Activated CD4-positive, alpha-beta T cell treated with anti-CD3 and anti-CD28 coated beads for 36 hours (primary cell): ENCODE measurements at regions of chr1 and their contacts with region 1.

Region 1: GRCh38 chr1:51878616-51879336 is at the start of gene NRDC:
- DNase-seq: peak; percentile 100
- ATAC-seq: peak; percentile 95
- H3K4me3 Mint-ChIP-seq: no peak within 1 kb of the TSS
- H3K27ac Mint-ChIP-seq: no peak within 1 kb of the TSS
- H3K4me1 Mint-ChIP-seq: peaks cover 27% of the 10 kb centered on the region
- H3K27me3 Mint-ChIP-seq: peaks cover 12% of the 10 kb centered on the region
- total RNA-seq, gene NRDC: 149 to 186 TPM

Region 2: DNA sequence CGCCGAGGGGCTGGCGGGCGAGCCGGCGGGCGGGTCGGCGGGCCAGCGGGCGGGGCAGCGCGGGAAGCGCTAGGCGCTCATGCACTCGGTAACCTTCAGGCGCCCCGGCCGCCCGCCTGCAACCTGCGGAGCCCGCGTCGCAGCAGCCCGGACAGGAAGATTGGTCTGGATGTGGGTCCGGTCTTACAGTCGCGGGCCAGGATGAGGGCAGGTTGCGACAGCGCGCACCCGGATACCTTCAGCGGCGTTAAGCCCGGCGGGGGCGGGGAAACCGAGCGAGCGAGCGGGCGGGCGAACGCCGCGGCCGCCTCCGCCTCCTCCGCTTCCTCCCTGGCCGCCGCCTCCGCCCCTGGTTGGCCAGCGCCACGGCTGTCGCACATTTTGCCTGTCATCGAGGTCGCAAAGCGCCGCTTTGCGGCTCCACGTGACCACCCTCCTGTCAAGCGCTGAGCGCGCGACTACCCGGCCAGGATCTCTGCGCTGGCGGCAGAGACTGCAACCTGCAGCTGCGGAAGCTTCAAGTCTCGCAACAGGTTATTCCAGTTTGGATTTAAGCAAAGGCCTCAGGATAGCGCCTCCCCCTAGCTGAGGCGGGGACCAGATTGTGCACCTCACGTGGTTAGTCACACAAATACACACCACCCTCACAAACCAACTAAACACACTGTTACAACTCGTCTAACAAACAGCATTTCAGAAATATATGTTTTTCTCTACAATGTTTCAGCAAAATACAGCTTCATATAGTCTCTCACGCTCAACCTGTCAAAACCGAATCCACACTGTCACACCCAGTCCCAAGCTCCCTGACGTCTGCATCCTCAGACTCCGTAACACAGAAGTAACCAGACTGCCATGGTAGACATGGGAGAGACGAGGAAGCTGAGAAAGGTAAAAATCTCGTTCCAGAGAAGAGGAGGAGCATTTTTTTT is 918.6 kb before region 1 on chr1 and contains the start of gene FAF1:
- CTCF ChIA-PET with region 1: no interaction called
- POLR2A ChIA-PET with region 1: no interaction called
- intact Hi-C with region 1: loop called in 1 of 2 experiments (anchors 1 kb)
- DNase-seq: peak; percentile 98
- ATAC-seq: peak; percentile 91
- H3K4me3 Mint-ChIP-seq: peak within 1 kb of the TSS; percentile 80
- H3K27ac Mint-ChIP-seq: peak within 1 kb of the TSS; percentile 96
- H3K4me1 Mint-ChIP-seq: peaks cover 24% of the 10 kb centered on the region
- H3K27me3 Mint-ChIP-seq: no peaks in the 10 kb centered on the region
- total RNA-seq, gene FAF1: 64.5 to 73.1 TPM

Region 3: GRCh38 chr1:51247022-51247421 is 631.8 kb before region 1 on chr1:
- CTCF ChIA-PET with region 1: no interaction called
- POLR2A ChIA-PET with region 1: interaction called, 11 read pairs
- intact Hi-C with region 1: no loop called
- DNase-seq: no peak
- ATAC-seq: peak; percentile 51
- H3K4me3 Mint-ChIP-seq: no peak overlapping the region
- H3K27ac Mint-ChIP-seq: no peak overlapping the region
- H3K4me1 Mint-ChIP-seq: peaks cover 46% of the 10 kb centered on the region
- H3K27me3 Mint-ChIP-seq: no peaks in the 10 kb centered on the region

Region 4: DNA sequence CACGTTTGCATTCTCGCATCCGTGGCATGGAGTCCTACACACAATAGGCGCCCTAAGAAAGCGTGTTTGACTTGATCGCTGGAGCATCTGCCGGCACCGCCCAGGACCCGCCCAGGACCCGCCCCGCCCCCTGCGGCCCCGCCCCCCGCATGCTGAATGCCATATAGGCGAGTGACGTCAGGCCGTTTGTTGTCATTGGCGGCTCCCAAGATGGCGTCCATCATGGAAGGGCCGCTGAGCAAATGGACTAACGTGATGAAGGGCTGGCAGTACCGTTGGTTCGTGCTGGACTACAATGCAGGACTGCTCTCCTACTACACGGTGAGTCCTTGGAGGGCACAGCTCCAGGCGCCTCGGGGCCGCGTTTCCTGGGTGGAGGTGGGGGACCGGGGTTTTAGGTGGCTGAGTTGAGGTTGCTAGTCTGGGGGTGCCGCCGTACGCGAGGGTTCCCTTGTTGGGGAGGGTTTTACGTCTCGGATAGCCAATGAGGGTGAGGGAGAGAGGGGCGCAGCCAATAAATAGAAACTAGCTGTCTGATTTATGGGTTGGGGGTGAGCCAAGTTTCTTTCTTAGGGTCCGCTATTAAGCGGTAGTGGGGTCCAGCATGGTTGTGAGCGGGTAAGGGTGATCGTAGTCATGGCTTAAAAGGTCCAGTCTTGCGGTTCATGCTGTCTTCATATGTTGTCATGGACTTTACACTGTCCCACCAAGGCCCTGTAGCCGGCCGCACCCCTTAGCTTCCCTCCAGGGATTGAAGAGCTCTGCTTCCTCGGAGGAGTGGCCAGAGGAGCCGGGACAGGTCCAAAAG is 261.7 kb before region 1 on chr1 and contains the start of gene OSBPL9:
- CTCF ChIA-PET with region 1: no interaction called
- POLR2A ChIA-PET with region 1: no interaction called
- intact Hi-C with region 1: loop called in 1 of 2 experiments (anchors 1 kb)
- DNase-seq: peak; percentile 95
- ATAC-seq: peak; percentile 95
- H3K4me3 Mint-ChIP-seq: peak within 1 kb of the TSS; percentile 100
- H3K27ac Mint-ChIP-seq: peak within 1 kb of the TSS; percentile 96
- H3K4me1 Mint-ChIP-seq: peaks cover 33% of the 10 kb centered on the region
- H3K27me3 Mint-ChIP-seq: no peaks in the 10 kb centered on the region
- total RNA-seq, gene OSBPL9: 46.2 to 64.5 TPM

Region 5: DNA sequence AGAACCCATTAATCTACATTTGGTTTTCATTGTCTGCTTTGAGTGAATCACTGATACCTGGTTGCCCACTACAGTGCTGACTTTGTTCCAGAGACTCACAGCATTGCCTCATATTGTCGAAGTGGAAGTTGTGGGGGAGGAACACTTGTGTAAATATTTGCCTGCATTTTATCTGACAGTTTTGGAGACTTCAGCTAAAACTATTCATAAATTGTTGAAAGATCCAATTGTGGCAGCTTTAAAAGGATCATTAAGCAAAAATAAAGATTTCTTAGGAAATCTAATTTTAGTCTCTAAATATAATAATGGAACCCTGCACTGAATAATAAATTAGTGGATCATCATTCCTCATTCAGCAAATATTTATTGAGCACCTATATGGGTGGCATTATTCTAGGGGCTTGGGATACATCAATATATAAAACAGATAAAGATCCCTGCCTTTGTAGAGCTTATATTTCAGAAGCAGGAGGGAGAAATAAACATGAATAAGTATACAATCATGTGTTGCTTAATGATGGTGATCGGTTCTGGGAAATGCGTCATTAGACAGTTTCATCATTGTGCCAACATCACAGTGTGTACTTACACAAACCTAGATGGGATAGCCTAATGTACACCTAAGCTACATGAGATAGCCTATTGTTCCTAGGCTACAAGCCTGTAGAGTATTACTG is 188.4 kb before region 1 on chr1:
- CTCF ChIA-PET with region 1: no interaction called
- POLR2A ChIA-PET with region 1: no interaction called
- intact Hi-C with region 1: no loop called
- DNase-seq: no peak
- ATAC-seq: no peak
- H3K4me3 Mint-ChIP-seq: no peak overlapping the region
- H3K27ac Mint-ChIP-seq: no peak overlapping the region
- H3K4me1 Mint-ChIP-seq: peaks cover 22% of the 10 kb centered on the region
- H3K27me3 Mint-ChIP-seq: no peaks in the 10 kb centered on the region

Region 6: DNA sequence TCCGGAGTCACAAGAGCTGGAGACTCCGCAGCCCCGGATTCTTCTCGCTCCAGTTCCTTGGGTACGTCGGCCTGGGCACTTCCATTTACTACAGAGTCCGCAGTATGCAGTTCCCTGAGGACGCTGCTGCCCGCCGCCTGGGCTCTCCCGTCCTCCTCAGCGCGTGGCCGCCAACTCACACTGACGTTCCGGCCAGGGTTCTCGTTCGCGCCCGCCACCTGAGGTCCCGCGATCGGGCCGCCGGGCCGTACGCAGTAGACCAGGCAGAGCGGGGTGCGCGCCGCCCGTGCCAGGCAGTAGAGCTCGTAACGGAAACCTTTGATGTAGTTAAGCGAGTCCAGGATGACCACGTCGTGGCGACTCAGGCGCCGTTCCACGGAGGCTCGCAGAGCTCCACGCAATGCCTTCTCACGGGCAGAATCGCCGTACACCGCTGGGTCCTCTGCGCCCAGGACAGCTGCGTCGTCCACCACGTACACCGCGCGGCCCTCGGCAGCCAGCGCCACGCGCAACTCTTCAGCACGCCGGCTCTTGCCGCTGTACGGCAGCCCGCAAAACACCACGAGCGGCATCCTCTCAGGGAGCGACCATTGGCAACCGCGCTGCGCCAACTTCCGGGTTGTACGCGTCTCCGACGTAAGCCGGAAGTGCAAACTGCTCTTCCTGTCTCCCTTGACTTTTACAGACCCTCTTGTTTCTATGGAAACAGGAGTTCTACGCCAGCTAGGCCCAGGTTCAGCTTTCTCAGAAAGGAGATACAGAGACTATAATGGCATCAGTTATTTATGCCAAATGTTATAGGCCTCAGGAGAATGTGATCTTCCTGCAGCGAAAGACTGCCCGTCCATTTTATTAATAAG is 154.6 kb after region 1 on chr1 and contains the start of gene KTI12:
- CTCF ChIA-PET with region 1: interaction called, 3 read pairs
- POLR2A ChIA-PET with region 1: no interaction called
- intact Hi-C with region 1: loop called in 1 of 2 experiments (anchors 1 kb)
- DNase-seq: peak; percentile 93
- ATAC-seq: peak; percentile 94
- H3K4me3 Mint-ChIP-seq: peak within 1 kb of the TSS; percentile 91
- H3K27ac Mint-ChIP-seq: peak within 1 kb of the TSS; percentile 93
- H3K4me1 Mint-ChIP-seq: peaks cover 32% of the 10 kb centered on the region
- H3K27me3 Mint-ChIP-seq: no peaks in the 10 kb centered on the region
- total RNA-seq, gene KTI12: 7.6 to 12.3 TPM

Region 7: GRCh38 chr1:52726265-52727113 is 847.7 kb after region 1 on chr1 and contains the start of gene ZYG11B:
- CTCF ChIA-PET with region 1: no interaction called
- POLR2A ChIA-PET with region 1: no interaction called
- intact Hi-C with region 1: loop called in 1 of 2 experiments (anchors 2 kb)
- DNase-seq: peak; percentile 96
- ATAC-seq: peak; percentile 91
- H3K4me3 Mint-ChIP-seq: peak within 1 kb of the TSS; percentile 93
- H3K27ac Mint-ChIP-seq: peak within 1 kb of the TSS; percentile 85
- H3K4me1 Mint-ChIP-seq: peaks cover 32% of the 10 kb centered on the region
- H3K27me3 Mint-ChIP-seq: no peaks in the 10 kb centered on the region
- total RNA-seq, gene ZYG11B: 12.9 to 14.3 TPM